Posterior cingulate gyrus (tissue), 11 donors: ENCODE measurements at regions of chr18 and their contacts with region 1.

Region 1: DNA sequence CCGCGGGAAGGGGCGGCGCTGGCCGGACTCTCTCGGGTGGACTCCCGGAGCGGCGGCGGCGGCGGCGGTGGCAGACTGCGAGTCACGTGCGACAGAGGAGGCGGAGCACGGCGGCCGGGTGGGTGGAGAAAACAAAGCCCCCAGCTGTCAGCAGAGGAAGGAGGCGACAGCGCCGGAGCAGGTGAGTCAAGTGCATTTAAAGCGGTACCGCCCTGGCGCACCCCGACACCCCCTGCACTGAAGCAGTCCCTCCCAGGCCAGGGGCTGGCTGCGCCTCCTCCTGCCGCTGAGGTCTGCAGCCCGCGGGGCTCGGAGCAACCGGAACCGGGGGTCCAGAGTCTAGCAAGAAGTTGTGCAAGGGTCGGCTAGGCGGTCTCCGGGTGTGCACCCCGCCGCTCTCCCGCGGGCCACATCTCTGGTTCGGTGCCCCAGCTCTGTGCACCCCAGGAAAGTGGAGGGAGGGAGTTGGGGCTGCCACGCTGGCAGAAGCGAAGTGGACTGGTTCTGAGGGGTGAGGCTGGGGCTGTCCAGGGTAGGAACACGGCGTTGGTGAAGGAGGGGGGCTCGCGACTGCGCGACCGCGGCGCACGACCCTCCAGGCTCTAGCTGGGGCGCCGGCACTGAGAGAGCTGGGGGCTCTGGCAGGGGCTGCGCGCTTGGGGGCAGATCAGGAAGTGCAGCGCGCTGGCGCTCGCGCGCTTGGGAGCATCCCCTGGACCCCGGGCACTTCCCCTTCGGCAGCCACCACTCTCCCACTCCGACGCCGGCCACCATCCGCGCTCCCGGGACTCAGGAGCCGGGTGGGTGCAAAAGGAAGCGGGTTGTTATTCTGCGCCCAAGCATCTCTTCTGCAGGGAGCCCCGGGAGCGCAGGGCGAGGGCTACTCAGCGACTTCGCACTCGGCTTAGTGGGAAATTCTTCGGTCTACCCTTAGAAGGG is 64.0 kb upstream of the MAPRE2 start:
- DNase-seq: peak; percentile 82 to 98 (median 89)

Region 2: GRCh38 chr18:34880882-34881834 is 96.0 kb before region 1 on chr18:
- intact Hi-C with region 1: loop called (anchors 10 kb)
- DNase-seq: no peak

Region 3: GRCh38 chr18:34912010-34912721 is 65.0 kb before region 1 on chr18:
- intact Hi-C with region 1: loop called (anchors 5 kb)
- DNase-seq: peak in 1 of 10 donors; percentile 62

Region 4: DNA sequence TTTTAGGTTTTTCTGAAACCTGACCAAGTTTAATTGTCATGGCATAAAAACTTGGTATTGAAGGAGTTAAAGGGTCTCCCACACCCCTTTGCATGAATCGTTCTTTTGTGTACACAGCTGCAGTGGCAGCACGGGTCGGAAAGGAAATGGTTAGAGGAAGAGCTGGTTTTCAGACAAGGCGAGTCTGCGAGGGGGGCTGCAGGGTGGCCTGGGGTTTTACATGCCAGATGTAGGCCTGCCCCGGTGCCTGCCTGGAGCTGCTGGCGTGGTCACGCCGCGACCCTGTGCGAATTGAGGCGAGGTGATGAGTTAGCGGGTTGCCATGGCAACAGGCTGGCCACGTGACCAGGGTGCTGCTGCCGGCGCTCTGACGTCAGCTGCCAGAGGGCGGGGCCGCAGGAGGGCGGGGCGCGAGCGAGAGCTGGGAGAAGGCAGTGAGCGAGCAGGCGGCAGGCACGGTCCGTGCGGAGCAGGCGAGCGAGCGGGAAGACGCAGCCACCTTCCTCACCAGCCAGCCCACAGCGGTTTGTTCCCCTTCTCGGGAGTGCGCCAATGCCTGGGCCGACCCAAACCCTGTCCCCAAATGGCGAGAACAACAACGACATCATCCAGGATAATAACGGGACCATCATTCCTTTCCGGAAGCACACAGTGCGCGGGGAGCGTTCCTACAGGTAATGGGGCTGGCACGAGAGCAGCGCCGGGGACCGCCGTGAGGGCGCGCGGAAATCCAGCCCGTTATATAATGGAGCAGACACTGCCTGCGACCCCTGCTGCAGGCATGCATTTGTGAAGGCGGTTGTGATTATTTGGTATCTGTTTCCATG is 64.0 kb after region 1 on chr18 and contains the start of gene MAPRE2:
- intact Hi-C with region 1: loop called (anchors 2 kb)
- DNase-seq: peak; percentile 98 to 100 (median 100)